Gastrocnemius medialis (tissue), 4 donors: ENCODE measurements at regions of chr16 and their contacts with region 1.

Region 1: DNA sequence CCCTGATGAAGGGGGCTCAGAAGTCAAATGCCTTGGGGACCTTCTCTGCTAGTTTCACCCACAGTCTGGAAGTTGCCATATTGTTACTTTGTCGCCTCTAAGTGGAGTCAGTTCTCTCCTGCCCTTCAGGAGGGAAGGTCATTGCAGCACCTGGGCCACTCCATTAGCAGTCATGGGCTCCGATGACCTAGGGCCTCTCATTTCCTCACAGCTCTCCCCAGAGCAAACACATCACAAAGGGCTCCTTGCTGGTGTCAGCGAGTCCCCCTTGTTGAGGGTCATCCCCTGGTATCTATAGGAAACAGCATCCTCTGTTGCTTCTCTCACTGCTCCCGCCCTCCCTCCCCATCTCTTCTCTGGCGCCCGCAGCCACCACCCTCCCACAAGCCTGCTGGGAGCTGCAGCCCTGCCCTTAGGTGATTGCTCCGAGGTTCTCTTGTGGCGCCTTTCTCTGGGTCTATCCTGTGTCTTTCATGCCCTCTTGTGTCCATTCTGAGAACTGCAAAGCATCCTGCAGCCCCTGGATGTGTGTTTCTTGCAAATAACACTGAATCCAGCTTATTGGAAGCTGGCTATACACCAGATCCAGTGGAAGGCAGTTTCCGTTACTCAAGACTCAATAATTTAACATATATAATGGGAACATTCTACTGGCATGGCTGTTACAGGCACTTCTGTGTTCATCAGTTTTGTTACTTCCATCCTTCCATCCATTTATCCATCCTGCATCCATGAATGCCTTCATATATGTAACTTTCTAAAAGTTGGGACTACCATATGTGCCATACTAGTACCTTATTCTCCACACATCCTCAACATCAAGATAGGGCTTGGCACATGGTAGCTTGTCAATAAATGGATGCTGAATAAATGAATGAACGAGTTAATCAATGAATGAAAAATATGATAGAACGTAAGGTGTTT is 21.2 kb downstream of the PDILT start:
- DNase-seq: peak in 1 of 2 donors; percentile 14
- ATAC-seq: peak in 1 of 2 donors; percentile 55
- H3K4me3 ChIP-seq: no peak overlapping the region
- H3K27ac ChIP-seq: no peak overlapping the region
- H3K4me1 ChIP-seq: no peaks in the 10 kb centered on the region
- H3K27me3 ChIP-seq: no peaks in the 10 kb centered on the region
- CTCF ChIP-seq: peak in 4 of 5 experiments; percentile 27 to 62 (median 50)
- POLR2A ChIP-seq: no peak

Region 2: GRCh38 chr16:19555162-19555937 is 828.0 kb before region 1 on chr16 and contains the start of gene VPS35L:
- in situ Hi-C with region 1: no loop called
- intact Hi-C with region 1: loop called (anchors 10 kb)
- DNase-seq: peak; percentile 93 to 98
- ATAC-seq: peak; percentile 95 to 98
- H3K4me3 ChIP-seq: peak within 1 kb of the TSS; percentile 59 to 95 (median 64)
- H3K27ac ChIP-seq: peak within 1 kb of the TSS; percentile 91 to 95 (median 92)
- H3K4me1 ChIP-seq: peaks cover 8 to 17% of the 10 kb centered on the region in 2 donors
- H3K27me3 ChIP-seq: no peaks in the 10 kb centered on the region
- CTCF ChIP-seq: peak; percentile 81 to 86 (median 82)
- POLR2A ChIP-seq: peak; percentile 48 to 49
- total RNA-seq, gene VPS35L: 16.9 to 29.1 (median 24.8) TPM

Region 3: GRCh38 chr16:19907161-19907992 is 476.0 kb before region 1 on chr16:
- in situ Hi-C with region 1: loop called (anchors 5 to 25 kb)
- intact Hi-C with region 1: loop called (anchors 1 kb)
- DNase-seq: peak in 1 of 2 donors; percentile 23
- ATAC-seq: peak; percentile 52 to 77
- H3K4me3 ChIP-seq: no peak overlapping the region
- H3K27ac ChIP-seq: no peak overlapping the region
- H3K4me1 ChIP-seq: no peaks in the 10 kb centered on the region
- H3K27me3 ChIP-seq: peaks cover 0 to 2% (median 0%) of the 10 kb centered on the region in 3 donors
- CTCF ChIP-seq: peak; percentile 51 to 88 (median 77)
- POLR2A ChIP-seq: no peak

Region 4: GRCh38 chr16:19912455-19913339 is 470.7 kb before region 1 on chr16:
- in situ Hi-C with region 1: loop called (anchors 5 to 25 kb)
- intact Hi-C with region 1: loop called (anchors 1 kb)
- DNase-seq: no peak
- ATAC-seq: no peak
- H3K4me3 ChIP-seq: no peak overlapping the region
- H3K27ac ChIP-seq: no peak overlapping the region
- H3K4me1 ChIP-seq: no peaks in the 10 kb centered on the region
- H3K27me3 ChIP-seq: peaks cover 0 to 2% (median 0%) of the 10 kb centered on the region in 3 donors
- CTCF ChIP-seq: no peak
- POLR2A ChIP-seq: no peak

Region 5: GRCh38 chr16:20243731-20244281 is 139.6 kb before region 1 on chr16:
- in situ Hi-C with region 1: no loop called
- intact Hi-C with region 1: no loop called
- DNase-seq: no peak
- ATAC-seq: no peak
- H3K4me3 ChIP-seq: no peak overlapping the region
- H3K27ac ChIP-seq: no peak overlapping the region
- H3K4me1 ChIP-seq: no peaks in the 10 kb centered on the region
- H3K27me3 ChIP-seq: no peaks in the 10 kb centered on the region
- CTCF ChIP-seq: no peak
- POLR2A ChIP-seq: no peak